Adrenal gland (tissue), 19 donors: ENCODE measurements at regions of chr7 and their contacts with region 1.

Region 1: GRCh38 chr7:77759294-77759889 is 38.8 kb downstream of the TMEM60 start:
- DNase-seq: peak; percentile 46 to 89 (median 73)
- H3K4me3 ChIP-seq: no peak overlapping the region
- H3K27ac ChIP-seq: no peak overlapping the region
- H3K4me1 ChIP-seq: peaks cover 0 to 23% of the 10 kb centered on the region in 2 donors
- H3K27me3 ChIP-seq: no peaks in the 10 kb centered on the region
- CTCF ChIP-seq: peak; percentile 78 to 89 (median 82)
- POLR2A ChIP-seq: no peak

Region 2: DNA sequence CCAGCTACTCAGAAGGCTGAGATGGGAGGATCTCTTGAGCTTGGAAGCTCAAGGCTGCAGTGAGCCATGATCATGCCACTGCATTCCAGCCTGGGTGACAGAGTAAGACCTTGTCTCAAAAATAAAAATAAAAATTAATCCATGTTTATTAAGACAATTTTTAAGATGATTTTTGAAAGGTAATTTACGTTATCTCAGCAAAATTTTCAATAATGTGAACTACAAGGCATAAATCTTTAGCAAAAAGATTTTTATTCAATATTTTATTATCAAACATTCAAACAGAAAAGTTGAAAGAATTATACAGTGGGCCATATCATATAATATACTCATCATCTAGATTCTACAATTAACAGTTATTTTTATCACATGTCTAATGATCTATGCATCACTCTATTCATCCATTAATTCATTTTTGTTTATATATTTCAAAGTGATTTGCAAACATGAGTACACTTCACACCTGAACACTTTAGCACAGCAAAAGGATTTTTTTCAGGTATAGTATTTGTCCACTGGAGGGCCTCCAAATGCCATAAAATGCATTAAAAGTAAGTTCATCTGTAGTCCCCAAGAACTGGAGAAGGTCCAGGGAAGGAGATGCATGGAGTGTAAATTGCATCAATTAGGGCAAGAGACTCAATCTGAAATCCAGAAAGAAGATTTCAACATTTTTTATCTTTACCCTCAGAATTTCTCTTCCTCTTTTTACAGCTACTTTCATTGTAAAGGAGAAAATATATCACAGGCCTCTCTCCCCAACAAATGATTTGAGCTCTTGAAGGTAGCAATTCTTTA is 101.8 kb before region 1 on chr7:
- intact Hi-C with region 1: loop called (anchors 5 kb)
- DNase-seq: peak in 2 of 7 donors; percentile 26 to 27
- H3K4me3 ChIP-seq: no peak overlapping the region
- H3K27ac ChIP-seq: no peak overlapping the region
- H3K4me1 ChIP-seq: peaks cover 0 to 4% of the 10 kb centered on the region in 2 donors
- H3K27me3 ChIP-seq: no peaks in the 10 kb centered on the region
- CTCF ChIP-seq: peak; percentile 21 to 62 (median 50)
- POLR2A ChIP-seq: no peak

Region 3: GRCh38 chr7:77950548-77950947 is 191.2 kb after region 1 on chr7:
- intact Hi-C with region 1: no loop called
- DNase-seq: no peak
- H3K4me3 ChIP-seq: no peak overlapping the region
- H3K27ac ChIP-seq: no peak overlapping the region
- H3K4me1 ChIP-seq: no peaks in the 10 kb centered on the region
- H3K27me3 ChIP-seq: no peaks in the 10 kb centered on the region
- CTCF ChIP-seq: no peak
- POLR2A ChIP-seq: no peak